ENCODE measurements at regions of chr22 and their contacts with region 1.

Region 1: DNA sequence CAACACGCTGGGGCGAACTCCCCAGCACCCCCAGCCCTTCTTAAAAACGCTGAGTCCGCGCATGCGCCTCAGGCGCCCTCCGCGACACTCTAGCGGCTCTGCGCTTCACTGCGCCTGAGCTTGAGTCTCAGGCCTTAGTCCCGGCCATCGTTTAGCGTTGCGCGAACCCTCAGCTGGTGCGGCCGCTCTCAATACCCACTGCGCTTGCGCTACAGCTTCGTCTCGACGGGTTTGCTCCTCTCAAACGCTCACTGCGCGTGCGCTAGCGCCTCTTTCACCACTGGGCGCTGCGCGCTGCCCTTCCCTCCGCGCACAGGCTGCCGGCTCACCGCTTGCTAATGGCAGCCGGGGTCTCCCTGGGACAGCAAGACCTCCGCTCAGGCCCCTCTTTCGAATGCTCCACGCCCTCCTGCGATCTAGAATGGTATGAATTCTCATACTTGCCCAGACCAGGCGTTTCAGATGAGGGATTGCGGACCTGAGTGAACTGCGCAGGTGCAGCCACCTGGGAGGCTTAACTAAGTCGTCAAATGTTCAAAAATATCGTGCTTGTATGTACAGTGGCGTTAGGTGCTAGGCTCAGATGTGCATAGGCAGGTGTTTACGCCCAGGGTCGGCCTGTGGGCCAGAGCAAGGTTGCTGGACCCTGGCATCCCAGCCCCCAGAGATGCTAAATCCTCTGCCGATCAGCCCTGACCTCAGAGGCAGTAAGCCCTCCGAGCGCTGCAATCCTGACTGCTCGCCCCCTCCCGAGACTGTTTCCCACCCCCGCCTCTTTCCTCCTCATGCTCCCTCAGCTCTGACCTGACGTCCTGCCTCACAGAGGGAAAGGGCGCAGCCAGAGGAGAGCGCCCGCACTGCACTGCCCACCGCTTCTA is at the start of gene SLC2A11:
- DNase-seq: peak; percentile 97
- ATAC-seq: peak; percentile 98
- H3K4me3 Mint-ChIP-seq: peak within 1 kb of the TSS; percentile 86
- H3K27ac Mint-ChIP-seq: peak within 1 kb of the TSS; percentile 84
- H3K4me1 Mint-ChIP-seq: peaks cover 20% of the 10 kb centered on the region
- H3K27me3 Mint-ChIP-seq: peaks cover 4% of the 10 kb centered on the region
- total RNA-seq, gene SLC2A11: 8.1 to 10.7 TPM

Region 2: GRCh38 chr22:23767673-23768548 is 89.9 kb before region 1 on chr22 and contains the start of gene CHCHD10:
- CTCF ChIA-PET with region 1: interaction called, 10 read pairs
- DNase-seq: peak; percentile 85
- ATAC-seq: peak; percentile 71
- H3K4me3 Mint-ChIP-seq: peak within 1 kb of the TSS; percentile 75
- H3K27ac Mint-ChIP-seq: peak within 1 kb of the TSS; percentile 75
- H3K4me1 Mint-ChIP-seq: peaks cover 53% of the 10 kb centered on the region
- H3K27me3 Mint-ChIP-seq: no peaks in the 10 kb centered on the region
- total RNA-seq, gene CHCHD10: 155 to 159 TPM

Region 3: DNA sequence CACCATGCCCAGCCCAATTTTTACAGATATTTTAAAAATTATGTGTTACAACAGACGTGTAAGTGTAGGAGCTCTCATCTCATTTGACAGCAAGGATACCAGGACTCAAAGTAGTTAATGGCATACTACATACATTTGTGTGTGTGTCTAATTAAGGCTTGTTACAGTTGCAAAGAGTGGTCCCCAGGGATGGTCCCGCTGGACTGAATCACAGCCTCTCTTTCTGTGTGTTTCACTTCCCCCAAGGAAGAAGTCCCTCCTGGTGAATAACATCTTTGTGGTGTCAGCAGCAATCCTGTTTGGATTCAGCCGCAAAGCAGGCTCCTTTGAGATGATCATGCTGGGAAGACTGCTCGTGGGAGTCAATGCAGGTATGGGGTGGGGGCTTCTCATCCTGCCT is 17.0 kb after region 1 on chr22:
- CTCF ChIA-PET with region 1: interaction called, 13 read pairs
- DNase-seq: no peak
- ATAC-seq: no peak
- H3K4me3 Mint-ChIP-seq: no peak overlapping the region
- H3K27ac Mint-ChIP-seq: no peak overlapping the region
- H3K4me1 Mint-ChIP-seq: no peaks in the 10 kb centered on the region
- H3K27me3 Mint-ChIP-seq: no peaks in the 10 kb centered on the region

Region 4: DNA sequence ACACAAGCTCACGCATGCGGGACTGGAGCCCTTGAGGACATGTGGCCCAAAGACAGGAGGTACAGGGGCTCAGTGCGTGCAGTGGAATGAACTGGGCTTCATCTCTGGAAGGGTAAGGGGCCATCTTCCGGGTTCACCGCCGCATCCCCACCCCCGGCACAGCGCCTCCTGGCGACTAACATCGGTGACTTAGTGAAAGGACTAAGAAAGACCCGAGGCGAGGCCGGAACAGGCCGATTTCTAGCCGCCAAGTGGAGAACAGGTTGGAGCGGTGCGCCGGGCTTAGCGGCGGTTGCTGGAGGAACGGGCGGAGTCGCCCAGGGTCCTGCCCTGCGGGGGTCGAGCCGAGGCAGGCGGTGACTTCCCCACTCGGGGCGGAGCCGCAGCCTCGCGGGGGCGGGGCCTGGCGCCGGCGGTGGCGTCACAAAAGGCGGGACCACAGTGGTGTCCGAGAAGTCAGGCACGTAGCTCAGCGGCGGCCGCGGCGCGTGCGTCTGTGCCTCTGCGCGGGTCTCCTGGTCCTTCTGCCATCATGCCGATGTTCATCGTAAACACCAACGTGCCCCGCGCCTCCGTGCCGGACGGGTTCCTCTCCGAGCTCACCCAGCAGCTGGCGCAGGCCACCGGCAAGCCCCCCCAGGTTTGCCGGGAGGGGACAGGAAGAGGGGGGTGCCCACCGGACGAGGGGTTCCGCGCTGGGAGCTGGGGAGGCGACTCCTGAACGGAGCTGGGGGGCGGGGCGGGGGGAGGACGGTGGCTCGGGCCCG is 36.3 kb after region 1 on chr22 and contains the start of gene MIF:
- CTCF ChIA-PET with region 1: interaction called, 35 read pairs
- DNase-seq: peak; percentile 98
- ATAC-seq: peak; percentile 88
- H3K4me3 Mint-ChIP-seq: peak within 1 kb of the TSS; percentile 89
- H3K27ac Mint-ChIP-seq: peak within 1 kb of the TSS; percentile 96
- H3K4me1 Mint-ChIP-seq: peaks cover 34% of the 10 kb centered on the region
- H3K27me3 Mint-ChIP-seq: no peaks in the 10 kb centered on the region
- total RNA-seq, gene MIF: 730 to 765 TPM

Measured in activated CD8-positive, alpha-beta memory T cell treated with anti-CD3 and anti-CD28 coated beads, Interleukin-2, amount 10 ng/mL, durations not matched to agents 7 days and 5 days (primary cell).